SK-N-SH (cell line): ENCODE measurements at regions of chr6 and their contacts with region 1.

Region 1: GRCh38 chr6:4021133-4021853 is 57.6 kb downstream of the FAM217A start:
- DNase-seq: peak; percentile 91
- H3K4me3 ChIP-seq: peak overlapping the region; percentile 75 to 95
- H3K27ac ChIP-seq: peak overlapping the region; percentile 94 to 96
- H3K4me1 ChIP-seq: peaks cover 11 to 13% of the 10 kb centered on the region in 2 experiments; a peak in 2 of 4 replicates
- H3K27me3 ChIP-seq: no peaks in the 10 kb centered on the region
- CTCF ChIP-seq: peak; percentile 42
- EP300 ChIP-seq: no peak
- RAD21 ChIP-seq: no peak; the same call in 1 of the 2 replicates

Region 2: GRCh38 chr6:4008324-4009047 is 12.8 kb before region 1 on chr6:
- CTCF ChIA-PET with region 1: interaction called, 14 read pairs
- POLR2A ChIA-PET with region 1: interaction called, 5 read pairs
- DNase-seq: peak; percentile 49
- H3K4me3 ChIP-seq: no peak overlapping the region; a peak in 1 of 4 replicates
- H3K27ac ChIP-seq: peak overlapping the region in 1 of 2 experiments; percentile 9; a peak in 1 of 4 replicates
- H3K4me1 ChIP-seq: peaks cover 0 to 6% of the 10 kb centered on the region in 2 experiments; a peak in 2 of 4 replicates
- H3K27me3 ChIP-seq: no peaks in the 10 kb centered on the region
- CTCF ChIP-seq: peak; percentile 69
- EP300 ChIP-seq: no peak
- RAD21 ChIP-seq: peak; percentile 76